HCT116 (cell line): ENCODE measurements at regions of chr5 and their contacts with region 1.

Region 1: DNA sequence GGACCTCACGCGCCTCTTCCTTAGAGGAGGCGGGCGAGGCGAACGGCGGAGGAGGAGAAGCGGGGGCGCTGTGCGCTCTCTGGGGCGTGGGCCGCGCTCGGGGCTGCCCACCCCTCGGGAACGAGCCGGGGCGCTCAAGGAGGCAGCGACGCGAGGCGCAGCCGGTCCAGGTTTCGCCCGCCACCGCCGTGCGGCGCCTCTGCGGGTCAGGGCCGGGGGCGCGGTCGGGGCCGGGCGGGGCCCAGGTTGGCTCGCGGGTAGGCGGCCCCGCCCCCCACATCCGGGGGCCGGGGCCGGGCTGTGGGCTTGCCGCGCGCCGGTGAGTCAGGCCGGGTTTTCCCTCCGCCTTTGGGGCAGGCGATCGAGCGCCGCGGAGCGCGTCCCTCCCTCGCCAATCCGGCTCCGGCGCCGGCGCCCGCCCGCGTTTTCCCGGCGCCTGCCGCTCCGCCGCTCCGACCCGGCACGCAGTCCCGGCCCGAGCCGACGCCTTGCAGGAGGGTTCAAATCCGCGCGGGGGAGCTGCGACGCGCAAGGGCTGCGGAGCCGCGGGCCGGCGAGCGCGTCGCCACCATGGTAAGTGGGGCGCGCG is at the start of gene N4BP3:
- DNase-seq: peak; percentile 47
- ATAC-seq: peak; percentile 84
- H3K4me3 ChIP-seq: peak within 1 kb of the TSS; percentile 63 to 76
- H3K27ac ChIP-seq: peak within 1 kb of the TSS; percentile 60
- H3K4me1 ChIP-seq: peaks cover 18 to 35% of the 10 kb centered on the region in 2 experiments
- H3K27me3 ChIP-seq: no peaks in the 10 kb centered on the region
- CTCF ChIP-seq: no peak
- POLR2A ChIP-seq: no peak
- RAD21 ChIP-seq: no peak
- total RNA-seq, gene N4BP3: 5.2 TPM

Region 2: DNA sequence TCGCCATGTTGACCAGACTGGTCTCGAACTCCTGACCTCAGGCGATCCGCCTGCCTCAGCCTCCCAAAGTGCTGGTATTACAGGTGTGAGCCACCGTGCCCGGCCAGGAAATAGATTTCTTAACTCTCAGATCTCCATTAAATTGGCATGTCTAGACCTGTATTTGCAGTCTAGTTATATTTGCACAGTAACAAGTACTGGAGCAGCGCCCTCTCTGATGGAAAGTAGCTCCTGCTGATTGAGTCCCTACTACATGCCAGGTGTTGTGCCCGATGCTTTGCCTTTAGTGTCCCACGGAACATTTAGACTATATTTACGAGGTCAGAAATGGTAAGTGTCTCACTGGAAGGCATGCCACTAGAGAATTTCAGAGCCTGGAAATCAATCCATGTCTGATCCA is 537.1 kb before region 1 on chr5:
- CTCF ChIA-PET with region 1: no interaction called
- POLR2A ChIA-PET with region 1: no interaction called
- RAD21 ChIA-PET with region 1: no interaction called
- intact Hi-C with region 1: no loop called
- DNase-seq: no peak
- ATAC-seq: peak; percentile 72
- H3K4me3 ChIP-seq: no peak overlapping the region
- H3K27ac ChIP-seq: no peak overlapping the region
- H3K4me1 ChIP-seq: no peaks in the 10 kb centered on the region
- H3K27me3 ChIP-seq: no peaks in the 10 kb centered on the region
- CTCF ChIP-seq: 0 out of 6 replicates have a peak, but pooled peaks of 1 of the 3 experiments have one; percentile 26
- POLR2A ChIP-seq: no peak
- RAD21 ChIP-seq: no peak

Region 3: DNA sequence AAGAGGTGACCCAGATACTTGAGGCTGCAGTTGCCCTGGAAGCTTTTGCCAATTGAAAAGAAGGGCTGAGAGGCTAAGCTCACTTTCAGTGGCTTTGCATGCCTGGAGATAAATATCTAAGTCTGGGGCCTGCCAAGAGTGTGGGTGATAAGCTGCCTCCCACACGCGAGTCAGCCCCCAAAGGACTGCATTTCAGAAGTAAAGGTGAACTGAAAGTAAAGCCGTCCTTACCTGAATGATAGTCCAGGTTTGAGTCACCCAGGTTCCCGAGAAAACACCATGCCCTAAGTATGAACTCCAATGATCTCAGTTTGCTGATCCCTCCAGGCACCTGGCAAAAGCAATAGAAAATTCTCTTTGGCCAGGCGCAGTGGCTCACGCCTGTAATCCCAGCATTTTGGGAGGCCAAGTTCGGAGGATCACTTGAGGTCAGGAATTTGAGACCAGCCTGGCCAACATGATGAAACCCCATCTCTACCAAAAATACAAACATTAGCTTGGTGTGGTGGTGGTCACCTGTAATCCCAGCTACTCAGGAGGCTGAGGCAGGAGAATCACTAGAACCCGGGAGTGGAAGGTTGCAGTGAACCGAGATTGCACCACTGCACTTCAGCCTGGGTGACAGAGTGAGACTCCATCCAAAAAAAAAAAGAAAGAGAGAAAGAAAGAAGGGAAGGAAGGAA is 22.3 kb before region 1 on chr5:
- CTCF ChIA-PET with region 1: no interaction called
- POLR2A ChIA-PET with region 1: no interaction called
- RAD21 ChIA-PET with region 1: no interaction called
- intact Hi-C with region 1: no loop called
- DNase-seq: no peak
- ATAC-seq: no peak
- H3K4me3 ChIP-seq: no peak overlapping the region
- H3K27ac ChIP-seq: no peak overlapping the region
- H3K4me1 ChIP-seq: no peaks in the 10 kb centered on the region
- H3K27me3 ChIP-seq: no peaks in the 10 kb centered on the region
- CTCF ChIP-seq: no peak
- POLR2A ChIP-seq: no peak
- RAD21 ChIP-seq: no peak

Region 4: GRCh38 chr5:178130604-178131485 is 17.6 kb after region 1 on chr5 and contains the start of gene RMND5B:
- CTCF ChIA-PET with region 1: interaction called, 3 read pairs
- POLR2A ChIA-PET with region 1: no interaction called
- RAD21 ChIA-PET with region 1: no interaction called
- intact Hi-C with region 1: loop called (anchors 1 kb)
- DNase-seq: peak; percentile 37
- ATAC-seq: peak; percentile 90
- H3K4me3 ChIP-seq: peak within 1 kb of the TSS; percentile 88 to 94
- H3K27ac ChIP-seq: peak within 1 kb of the TSS; percentile 60
- H3K4me1 ChIP-seq: peaks cover 6 to 15% of the 10 kb centered on the region in 2 experiments; a peak in 2 of 4 replicates
- H3K27me3 ChIP-seq: no peaks in the 10 kb centered on the region
- CTCF ChIP-seq: no peak
- POLR2A ChIP-seq: peak; percentile 64
- RAD21 ChIP-seq: no peak
- total RNA-seq, gene RMND5B: 24.1 TPM

Region 5: DNA sequence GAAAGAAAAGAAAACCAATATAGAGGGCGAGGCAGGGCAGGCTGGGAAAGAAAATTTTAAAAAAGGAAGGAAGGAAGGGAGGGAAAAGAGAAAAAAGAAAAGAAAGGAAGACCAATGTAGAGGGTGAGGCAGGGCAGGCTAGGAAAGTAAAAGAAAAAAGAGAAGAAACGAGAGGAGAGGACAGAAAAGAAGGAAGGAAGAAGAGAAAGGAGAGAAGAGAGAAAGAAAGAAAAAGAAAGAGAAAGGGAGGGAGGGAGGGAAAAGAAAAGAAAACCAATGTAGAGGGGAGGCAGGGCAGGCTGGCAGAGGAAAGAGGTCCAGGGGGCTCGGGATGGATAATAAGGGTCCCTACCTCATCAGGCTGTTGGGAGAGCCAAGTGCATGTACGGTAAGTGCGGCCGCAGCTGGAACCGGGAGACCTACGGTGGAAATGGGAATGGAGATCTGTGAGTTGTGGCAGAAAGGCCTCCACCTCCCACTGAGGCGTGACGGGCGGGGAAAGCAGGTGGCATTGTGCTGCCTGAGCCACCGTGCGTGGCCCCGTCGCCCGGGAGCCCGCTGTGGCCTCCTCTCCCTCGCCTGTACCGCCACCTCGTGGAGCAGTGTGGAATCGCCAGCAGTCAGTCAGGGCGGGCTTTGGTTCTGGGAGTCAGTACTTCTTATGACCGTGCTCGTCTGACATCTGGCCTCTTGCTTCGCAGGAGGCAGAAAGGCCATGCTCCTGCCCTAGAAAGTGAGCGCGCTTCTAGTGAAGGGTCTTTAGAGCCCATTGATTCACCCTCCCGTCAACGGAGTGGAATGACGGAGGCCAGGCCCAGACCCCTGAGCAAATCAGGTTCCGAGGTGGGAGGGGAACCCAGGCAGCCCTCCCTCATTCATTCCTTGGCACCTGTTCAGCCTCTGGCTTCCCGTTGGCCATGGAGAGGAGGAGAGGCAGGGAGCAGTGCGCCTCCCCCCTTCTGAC is 50.8 kb after region 1 on chr5:
- CTCF ChIA-PET with region 1: no interaction called
- POLR2A ChIA-PET with region 1: no interaction called
- RAD21 ChIA-PET with region 1: no interaction called
- intact Hi-C with region 1: no loop called
- DNase-seq: peak; percentile 62
- ATAC-seq: peak; percentile 98
- H3K4me3 ChIP-seq: peak overlapping the region; percentile 13
- H3K27ac ChIP-seq: no peak overlapping the region
- H3K4me1 ChIP-seq: peaks cover 2 to 11% of the 10 kb centered on the region in 2 experiments; a peak in 3 of 4 replicates
- H3K27me3 ChIP-seq: no peaks in the 10 kb centered on the region
- CTCF ChIP-seq: peak; percentile 97 to 98 (median 98)
- POLR2A ChIP-seq: no peak
- RAD21 ChIP-seq: peak; percentile 99

Region 6: GRCh38 chr5:178404987-178405386 is 291.7 kb after region 1 on chr5:
- CTCF ChIA-PET with region 1: no interaction called
- POLR2A ChIA-PET with region 1: no interaction called
- RAD21 ChIA-PET with region 1: no interaction called
- intact Hi-C with region 1: no loop called
- DNase-seq: no peak
- ATAC-seq: no peak
- H3K4me3 ChIP-seq: no peak overlapping the region
- H3K27ac ChIP-seq: no peak overlapping the region
- H3K4me1 ChIP-seq: no peaks in the 10 kb centered on the region
- H3K27me3 ChIP-seq: 0 out of 2 replicates have a peak, but pooled peaks cover 1% of the 10 kb centered on the region
- CTCF ChIP-seq: no peak
- POLR2A ChIP-seq: no peak
- RAD21 ChIP-seq: no peak